Gastrocnemius medialis (tissue), 4 donors: ENCODE measurements at regions of chr5 and their contacts with region 1.

Region 1: GRCh38 chr5:78964887-78965286 is 20.2 kb downstream of the ARSB start:
- DNase-seq: no peak
- ATAC-seq: peak; percentile 76 to 86
- H3K4me3 ChIP-seq: no peak overlapping the region
- H3K27ac ChIP-seq: no peak overlapping the region
- H3K4me1 ChIP-seq: no peaks in the 10 kb centered on the region
- H3K27me3 ChIP-seq: no peaks in the 10 kb centered on the region
- CTCF ChIP-seq: peak; percentile 18 to 51 (median 41)
- POLR2A ChIP-seq: no peak

Region 2: GRCh38 chr5:78320401-78320800 is 644.5 kb before region 1 on chr5:
- in situ Hi-C with region 1: loop called in 1 of 4 experiments (anchors 25 kb)
- intact Hi-C with region 1: no loop called
- DNase-seq: no peak
- ATAC-seq: no peak
- H3K4me3 ChIP-seq: no peak overlapping the region
- H3K27ac ChIP-seq: no peak overlapping the region
- H3K4me1 ChIP-seq: no peaks in the 10 kb centered on the region
- H3K27me3 ChIP-seq: no peaks in the 10 kb centered on the region
- CTCF ChIP-seq: peak in 3 of 5 experiments; percentile 33 to 50 (median 37)
- POLR2A ChIP-seq: no peak

Region 3: GRCh38 chr5:78467752-78468357 is 497.0 kb before region 1 on chr5:
- in situ Hi-C with region 1: loop called in 1 of 4 experiments (anchors 5 kb)
- intact Hi-C with region 1: loop called (anchors 5 kb)
- DNase-seq: no peak
- ATAC-seq: peak in 1 of 2 donors; percentile 66
- H3K4me3 ChIP-seq: no peak overlapping the region
- H3K27ac ChIP-seq: no peak overlapping the region
- H3K4me1 ChIP-seq: no peaks in the 10 kb centered on the region
- H3K27me3 ChIP-seq: no peaks in the 10 kb centered on the region
- CTCF ChIP-seq: peak; percentile 55 to 78 (median 67)
- POLR2A ChIP-seq: no peak

Region 4: DNA sequence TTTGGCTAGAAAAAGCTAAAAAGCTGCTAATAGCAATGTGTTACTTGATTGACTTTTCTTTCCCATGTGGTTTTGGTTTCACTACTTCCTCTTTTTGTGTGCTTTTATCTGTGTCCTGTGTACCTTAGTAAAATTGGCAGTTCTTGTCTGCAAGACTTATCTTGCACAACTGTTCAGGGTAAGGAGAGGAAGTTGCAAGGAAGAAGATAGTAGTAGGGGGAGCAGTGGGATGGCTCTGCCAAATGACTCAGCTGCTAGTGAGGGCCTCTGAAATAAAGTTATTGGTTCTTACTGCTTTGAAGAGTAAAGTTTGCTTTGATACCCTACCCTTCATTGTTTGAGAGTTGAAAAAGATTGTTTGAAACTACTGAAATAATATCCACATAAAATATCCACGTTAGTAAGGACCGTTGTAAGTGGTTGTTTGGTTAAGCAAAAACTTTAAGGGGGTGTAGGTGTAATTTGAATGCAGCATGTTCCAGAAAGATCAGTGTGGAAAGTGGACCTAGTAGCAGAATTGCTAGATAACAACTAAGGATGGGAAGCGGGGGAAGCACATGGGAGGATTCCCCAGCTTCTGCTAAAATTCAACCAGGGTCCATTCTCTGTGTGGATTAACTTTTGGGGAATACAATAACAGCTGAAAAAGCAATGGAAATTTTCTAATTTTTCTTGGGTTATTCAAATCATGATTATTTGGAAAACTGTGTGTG is 480.9 kb before region 1 on chr5:
- in situ Hi-C with region 1: loop called in 1 of 4 experiments (anchors 25 kb)
- intact Hi-C with region 1: no loop called
- DNase-seq: no peak
- ATAC-seq: peak in 1 of 2 donors; percentile 44
- H3K4me3 ChIP-seq: no peak overlapping the region
- H3K27ac ChIP-seq: no peak overlapping the region
- H3K4me1 ChIP-seq: no peaks in the 10 kb centered on the region
- H3K27me3 ChIP-seq: no peaks in the 10 kb centered on the region
- CTCF ChIP-seq: no peak
- POLR2A ChIP-seq: no peak

Region 5: DNA sequence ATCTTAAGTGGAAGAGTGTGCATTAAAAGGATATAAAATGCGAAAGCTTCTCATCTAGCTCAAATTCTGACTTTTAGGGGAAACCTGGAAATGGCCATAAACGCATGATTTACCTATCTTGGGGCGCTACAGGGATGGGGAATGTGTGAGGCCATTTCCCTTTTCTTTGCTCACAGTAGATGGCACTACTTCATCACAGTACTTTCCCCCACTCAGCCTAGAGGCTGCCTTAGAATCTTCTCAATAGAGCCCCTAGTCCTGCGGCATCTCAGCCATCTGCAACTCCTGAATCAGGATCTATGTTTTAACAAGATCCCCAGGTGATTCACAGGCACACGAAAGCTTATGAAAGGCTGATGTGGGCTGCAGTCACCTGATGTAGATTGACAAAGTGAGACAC is 427.1 kb before region 1 on chr5:
- in situ Hi-C with region 1: loop called in 2 of 4 experiments (anchors 10 to 25 kb)
- intact Hi-C with region 1: loop called (anchors 5 kb)
- DNase-seq: no peak
- ATAC-seq: peak; percentile 53 to 78
- H3K4me3 ChIP-seq: no peak overlapping the region
- H3K27ac ChIP-seq: no peak overlapping the region
- H3K4me1 ChIP-seq: no peaks in the 10 kb centered on the region
- H3K27me3 ChIP-seq: no peaks in the 10 kb centered on the region
- CTCF ChIP-seq: peak in 4 of 5 experiments; percentile 28 to 62 (median 45)
- POLR2A ChIP-seq: no peak

Region 6: DNA sequence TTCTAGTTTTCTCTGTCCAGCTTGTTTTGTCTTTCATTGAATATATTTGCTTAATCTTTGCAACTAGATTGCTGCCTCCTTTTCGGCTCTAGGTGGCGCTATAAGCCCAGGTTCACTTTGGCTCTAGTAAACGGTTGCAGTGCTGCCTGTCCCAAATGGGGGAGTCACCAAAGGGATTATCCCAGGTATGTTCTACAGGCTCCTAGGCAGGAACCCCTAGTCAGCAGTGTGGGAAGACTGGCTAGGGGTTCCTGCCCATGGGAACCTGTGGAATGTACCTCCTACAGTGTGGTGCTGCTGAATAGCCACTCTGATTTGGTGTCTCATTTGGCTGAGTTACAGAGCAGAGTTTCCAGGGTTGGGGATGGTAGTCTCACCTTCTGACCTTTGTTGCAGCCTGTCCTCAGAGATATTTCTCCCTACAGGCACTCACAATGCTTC is 64.9 kb before region 1 on chr5:
- in situ Hi-C with region 1: loop called in 2 of 4 experiments (anchors 10 kb)
- intact Hi-C with region 1: loop called (anchors 1 kb)
- DNase-seq: no peak
- ATAC-seq: peak in 1 of 2 donors; percentile 18
- H3K4me3 ChIP-seq: no peak overlapping the region
- H3K27ac ChIP-seq: no peak overlapping the region
- H3K4me1 ChIP-seq: no peaks in the 10 kb centered on the region
- H3K27me3 ChIP-seq: no peaks in the 10 kb centered on the region
- CTCF ChIP-seq: peak; percentile 46 to 67 (median 63)
- POLR2A ChIP-seq: no peak

Region 7: DNA sequence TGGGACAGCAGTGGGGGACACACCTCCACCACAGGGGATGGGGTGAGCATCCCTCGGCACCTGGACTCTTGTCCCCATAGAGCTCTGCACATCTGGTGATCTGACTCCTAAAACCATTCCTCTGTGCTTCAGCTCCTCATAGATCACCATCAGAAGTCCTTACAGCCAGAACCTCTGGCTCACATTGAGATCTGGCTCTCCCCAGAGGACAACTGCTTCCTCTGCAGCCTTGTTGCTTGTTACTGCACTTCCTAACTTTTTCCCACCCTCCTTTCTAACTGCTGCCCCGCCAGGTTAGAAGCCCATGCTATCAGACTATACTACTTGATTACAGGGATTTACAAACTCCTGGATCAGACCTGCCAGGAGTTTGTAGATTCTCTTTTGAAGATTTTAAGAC is 44.3 kb before region 1 on chr5:
- in situ Hi-C with region 1: no loop called
- intact Hi-C with region 1: no loop called
- DNase-seq: no peak
- ATAC-seq: no peak
- H3K4me3 ChIP-seq: no peak overlapping the region
- H3K27ac ChIP-seq: no peak overlapping the region
- H3K4me1 ChIP-seq: no peaks in the 10 kb centered on the region
- H3K27me3 ChIP-seq: no peaks in the 10 kb centered on the region
- CTCF ChIP-seq: peak in 1 of 5 experiments; percentile 11
- POLR2A ChIP-seq: no peak